Caco-2 (cell line): ENCODE measurements at regions of chr9 and their contacts with region 1.

Region 1: DNA sequence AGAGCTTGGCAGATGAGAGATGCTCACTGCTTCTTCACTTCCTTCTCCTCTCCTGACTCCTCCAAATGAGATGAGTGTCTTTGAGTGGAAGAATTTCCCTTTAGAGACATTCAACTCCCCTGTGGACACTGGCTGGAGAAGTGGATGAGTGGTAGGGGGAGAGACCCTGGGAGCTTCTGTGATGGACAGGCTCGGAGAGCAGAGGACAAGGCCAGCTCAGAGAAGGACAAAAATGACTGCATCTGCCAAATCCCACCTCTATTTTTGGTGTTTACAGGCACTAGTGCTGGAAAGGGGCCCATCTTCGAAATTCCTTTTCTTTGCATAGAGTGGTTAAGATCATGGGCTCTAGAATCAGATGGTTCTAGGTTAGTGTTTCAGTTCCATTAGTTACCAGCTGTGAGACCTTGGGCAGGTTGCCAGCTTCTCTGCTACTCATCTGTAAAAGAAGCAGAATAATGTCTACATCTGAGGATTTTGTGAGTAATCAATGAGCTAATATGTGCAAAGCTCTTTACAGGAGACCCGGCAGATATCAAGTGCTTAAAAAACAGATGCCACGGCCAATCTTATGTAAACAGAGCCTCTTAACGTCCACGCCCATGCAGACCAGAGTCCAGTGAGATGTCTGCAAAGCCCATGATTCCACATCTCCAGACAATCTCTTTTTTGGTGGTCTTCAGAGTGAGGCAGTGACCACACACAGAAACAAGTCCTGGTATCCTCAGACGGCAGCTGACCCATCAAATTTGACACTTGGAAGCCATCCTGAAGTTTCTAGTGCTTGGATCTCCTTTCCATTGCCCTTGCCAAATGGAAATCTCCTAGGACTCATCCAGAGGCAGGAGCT is 13.6 kb upstream of the COL27A1 start:
- DNase-seq: no peak
- H3K4me3 ChIP-seq: no peak overlapping the region
- H3K4me3 Mint-ChIP-seq: no peak overlapping the region
- H3K27ac Mint-ChIP-seq: no peak overlapping the region
- H3K4me1 ChIP-seq: peaks cover 16% of the 10 kb centered on the region
- H3K4me1 Mint-ChIP-seq: peaks cover 16% of the 10 kb centered on the region
- H3K27me3 ChIP-seq: no peaks in the 10 kb centered on the region
- H3K27me3 Mint-ChIP-seq: no peaks in the 10 kb centered on the region
- CTCF ChIP-seq: no peak

Region 2: GRCh38 chr9:114117996-114118830 is 23.6 kb before region 1 on chr9:
- CTCF ChIA-PET with region 1: no interaction called
- POLR2A ChIA-PET with region 1: no interaction called
- intact Hi-C with region 1: loop called (anchors 2 kb)
- DNase-seq: peak in 1 of 2 experiments; percentile 38
- H3K4me3 ChIP-seq: no peak overlapping the region
- H3K4me3 Mint-ChIP-seq: peak overlapping the region; percentile 3
- H3K27ac Mint-ChIP-seq: peak overlapping the region; percentile 3
- H3K4me1 ChIP-seq: peaks cover 45% of the 10 kb centered on the region
- H3K4me1 Mint-ChIP-seq: peaks cover 23% of the 10 kb centered on the region
- H3K27me3 ChIP-seq: no peaks in the 10 kb centered on the region
- H3K27me3 Mint-ChIP-seq: no peaks in the 10 kb centered on the region
- CTCF ChIP-seq: no peak

Region 3: GRCh38 chr9:114216081-114216480 is 74.3 kb after region 1 on chr9:
- CTCF ChIA-PET with region 1: no interaction called
- POLR2A ChIA-PET with region 1: no interaction called
- intact Hi-C with region 1: no loop called
- DNase-seq: no peak
- H3K4me3 ChIP-seq: no peak overlapping the region
- H3K4me3 Mint-ChIP-seq: no peak overlapping the region
- H3K27ac Mint-ChIP-seq: no peak overlapping the region
- H3K4me1 ChIP-seq: no peaks in the 10 kb centered on the region
- H3K4me1 Mint-ChIP-seq: no peaks in the 10 kb centered on the region
- H3K27me3 ChIP-seq: no peaks in the 10 kb centered on the region
- H3K27me3 Mint-ChIP-seq: no peaks in the 10 kb centered on the region
- CTCF ChIP-seq: no peak

Region 4: GRCh38 chr9:114263853-114264510 is 122.2 kb after region 1 on chr9:
- CTCF ChIA-PET with region 1: no interaction called
- POLR2A ChIA-PET with region 1: no interaction called
- intact Hi-C with region 1: no loop called
- DNase-seq: peak in 1 of 2 experiments; percentile 46
- H3K4me3 ChIP-seq: no peak overlapping the region
- H3K4me3 Mint-ChIP-seq: no peak overlapping the region
- H3K27ac Mint-ChIP-seq: no peak overlapping the region
- H3K4me1 ChIP-seq: no peaks in the 10 kb centered on the region
- H3K4me1 Mint-ChIP-seq: no peaks in the 10 kb centered on the region
- H3K27me3 ChIP-seq: no peaks in the 10 kb centered on the region
- H3K27me3 Mint-ChIP-seq: no peaks in the 10 kb centered on the region
- CTCF ChIP-seq: peak in 1 of 2 experiments; percentile 28